Activated CD4-positive, alpha-beta T cell treated with anti-CD3 and anti-CD28 coated beads for 36 hours (primary cell): ENCODE measurements at regions of chr3 and their contacts with region 1.

Region 1: DNA sequence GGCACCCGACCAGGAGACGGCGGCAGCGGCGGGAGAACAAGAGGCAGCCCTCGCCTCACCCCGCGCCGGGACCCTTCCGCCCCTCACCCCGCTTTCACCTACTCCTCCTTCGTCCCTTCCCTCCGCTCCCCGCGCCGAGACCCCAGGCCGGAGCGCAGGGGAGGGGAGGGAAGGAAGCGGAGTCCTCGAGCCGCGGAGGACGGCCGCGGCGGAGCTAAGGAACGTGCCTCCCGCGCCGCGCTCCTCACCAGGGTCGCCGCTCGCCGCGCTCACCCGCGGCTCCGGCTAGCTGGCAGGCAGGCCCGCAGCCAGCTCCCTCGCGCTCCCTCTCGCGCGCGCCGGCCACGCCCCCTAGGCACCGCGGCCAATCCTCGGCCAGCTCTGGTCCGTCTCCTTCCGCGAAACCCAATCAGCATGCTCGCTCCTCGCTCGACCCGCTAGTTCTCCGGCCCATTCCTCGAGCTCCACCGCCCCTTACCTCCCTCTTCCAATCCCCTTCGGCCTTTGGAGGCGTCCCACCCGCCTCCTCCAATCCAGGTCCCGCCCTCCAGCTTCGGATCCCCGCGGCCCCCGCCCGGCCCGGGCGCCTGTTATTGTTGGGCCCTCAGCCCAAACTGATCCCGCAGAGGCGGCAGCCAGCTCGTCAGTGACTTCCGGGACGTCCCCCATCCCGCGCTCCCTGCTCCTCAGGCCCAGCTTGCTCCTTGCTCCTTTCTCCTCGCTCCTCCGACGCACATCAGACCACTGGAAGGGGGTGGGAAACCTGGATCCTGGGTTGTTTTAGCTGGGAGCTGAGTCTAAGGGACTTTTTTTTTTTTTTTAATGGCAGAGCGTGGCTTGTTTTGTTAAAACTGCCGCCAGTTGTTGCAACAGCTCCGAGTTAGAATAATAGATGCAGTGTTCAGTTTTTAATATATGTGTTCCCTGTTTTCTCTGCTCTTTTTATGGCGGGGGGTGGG is at the start of gene DCBLD2:
- DNase-seq: peak; percentile 96
- ATAC-seq: peak; percentile 100
- H3K4me3 Mint-ChIP-seq: peak within 1 kb of the TSS; percentile 80
- H3K27ac Mint-ChIP-seq: peak within 1 kb of the TSS; percentile 69
- H3K4me1 Mint-ChIP-seq: peaks cover 16% of the 10 kb centered on the region
- H3K27me3 Mint-ChIP-seq: peaks cover 5% of the 10 kb centered on the region
- total RNA-seq, gene DCBLD2: 1.9 to 2.5 TPM

Region 2: DNA sequence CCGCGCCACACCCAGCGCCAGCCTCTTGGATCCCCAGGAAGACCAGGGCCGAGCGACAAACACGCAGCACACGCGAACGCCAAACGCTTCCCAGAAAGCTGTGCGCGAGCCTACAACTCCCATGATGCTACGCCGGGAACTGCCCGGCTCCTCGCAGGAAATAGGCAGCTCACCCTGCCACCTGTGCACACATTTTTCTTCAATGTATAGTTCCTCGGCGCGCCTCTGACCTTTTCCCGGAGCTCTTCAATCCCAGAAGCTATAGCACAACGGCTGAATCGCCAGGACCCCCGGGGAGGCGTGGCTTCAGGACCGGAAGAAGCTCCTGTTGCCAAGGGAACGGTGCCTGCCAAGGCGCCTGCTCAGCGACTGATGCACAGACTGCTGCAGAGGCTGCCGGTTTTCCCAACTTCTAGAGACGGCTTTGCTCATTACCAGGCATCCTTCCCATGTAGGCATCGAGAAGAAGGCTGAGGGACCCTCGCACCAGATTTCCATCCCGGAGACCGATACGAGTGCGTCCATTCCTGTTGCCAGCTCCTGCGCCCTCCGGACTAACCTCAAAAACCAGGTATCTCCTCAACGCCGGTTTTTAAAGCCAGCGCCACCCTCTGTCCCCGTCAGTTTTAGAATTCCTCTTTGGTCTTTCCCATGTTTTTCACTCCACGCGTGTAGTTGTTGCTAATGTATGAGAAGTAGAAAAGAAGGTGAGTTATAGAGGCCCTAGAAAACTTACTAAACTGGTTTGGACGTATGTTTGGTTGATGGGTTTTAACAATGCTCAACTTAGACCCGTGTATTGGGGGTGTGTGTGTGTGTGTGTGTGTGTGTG is 1137.0 kb before region 1 on chr3 and contains the start of gene ARL6:
- CTCF ChIA-PET with region 1: no interaction called
- POLR2A ChIA-PET with region 1: interaction called, 4 read pairs
- intact Hi-C with region 1: loop called in 1 of 2 experiments (anchors 5 kb)
- DNase-seq: peak; percentile 86
- ATAC-seq: peak; percentile 95
- H3K4me3 Mint-ChIP-seq: peak within 1 kb of the TSS; percentile 97
- H3K27ac Mint-ChIP-seq: peak within 1 kb of the TSS; percentile 97
- H3K4me1 Mint-ChIP-seq: peaks cover 25% of the 10 kb centered on the region
- H3K27me3 Mint-ChIP-seq: no peaks in the 10 kb centered on the region
- total RNA-seq, gene ARL6: 6.9 TPM

Region 3: DNA sequence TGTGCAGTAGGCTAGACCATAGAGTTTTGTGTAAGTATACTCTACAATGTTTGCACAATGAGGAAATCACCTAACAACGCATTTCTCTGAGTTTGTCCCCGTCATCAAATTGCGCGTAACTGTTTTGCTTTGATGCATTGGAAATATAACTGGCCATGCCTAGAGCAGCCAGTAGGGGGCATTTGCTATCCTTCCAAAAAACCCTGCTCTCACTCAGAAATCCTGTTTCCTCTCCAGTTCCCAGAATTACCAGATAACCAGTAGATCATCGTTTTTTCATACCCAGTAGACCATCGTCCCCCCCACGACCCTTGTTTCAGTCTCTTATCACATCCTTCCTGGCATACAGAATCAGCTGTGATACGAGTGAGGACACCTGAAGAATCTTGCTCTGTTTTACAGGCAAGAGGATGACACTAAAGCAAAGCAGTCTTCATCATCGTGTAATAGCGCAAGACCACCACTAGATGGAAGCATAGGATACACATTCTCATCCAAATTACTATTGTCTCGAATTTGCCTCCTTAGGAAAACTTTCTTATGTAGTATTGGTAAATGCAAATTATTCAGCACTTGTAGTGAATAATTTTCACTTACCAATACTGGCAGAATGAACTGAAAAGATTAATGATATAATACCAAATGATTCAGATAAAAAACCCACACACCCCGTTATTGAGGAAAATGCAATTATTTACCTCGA is 862.2 kb before region 1 on chr3:
- CTCF ChIA-PET with region 1: no interaction called
- POLR2A ChIA-PET with region 1: no interaction called
- intact Hi-C with region 1: loop called in 1 of 2 experiments (anchors 5 kb)
- DNase-seq: peak; percentile 84
- ATAC-seq: peak; percentile 88
- H3K4me3 Mint-ChIP-seq: peak overlapping the region; percentile 76
- H3K27ac Mint-ChIP-seq: peak overlapping the region; percentile 97
- H3K4me1 Mint-ChIP-seq: peaks cover 12% of the 10 kb centered on the region
- H3K27me3 Mint-ChIP-seq: peaks cover 4% of the 10 kb centered on the region

Region 4: DNA sequence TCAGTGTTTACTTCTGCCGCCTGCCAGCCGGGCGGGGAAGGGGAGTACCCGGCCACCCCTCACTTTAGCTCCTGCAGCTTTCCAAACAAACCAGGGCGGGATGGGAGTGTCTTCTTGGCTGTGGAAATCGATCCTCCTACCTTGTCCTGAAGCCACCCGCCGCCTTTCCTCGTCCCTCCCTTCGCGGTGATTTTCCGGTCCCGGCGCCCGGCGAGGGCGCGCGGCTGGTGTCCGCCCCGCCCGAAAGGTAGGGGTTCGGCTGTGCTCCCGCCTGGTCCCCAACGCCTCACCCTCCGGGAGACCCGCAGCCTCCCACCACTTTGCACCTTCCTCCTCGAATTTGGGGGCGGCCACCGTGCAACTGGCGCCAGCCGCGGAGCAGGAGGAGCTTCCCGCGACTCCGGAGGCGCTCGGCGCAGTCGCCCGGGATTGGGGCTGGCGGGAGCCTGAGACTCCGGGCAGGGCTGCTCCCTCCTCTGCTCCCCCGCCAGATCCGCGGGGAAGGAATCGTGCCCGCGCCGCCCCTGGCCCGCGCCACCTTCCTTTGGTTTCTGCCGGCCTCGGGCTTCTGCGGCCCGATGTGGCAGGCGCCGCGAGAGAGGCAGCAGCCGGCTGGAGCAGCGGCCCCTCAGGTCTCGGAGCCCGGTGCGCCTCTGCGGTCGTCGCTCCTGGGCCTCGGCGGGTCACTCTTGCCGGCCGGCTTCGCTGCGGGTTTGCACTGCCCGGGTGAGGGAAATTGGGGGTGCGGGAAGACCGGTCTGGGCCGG is 169.2 kb before region 1 on chr3:
- CTCF ChIA-PET with region 1: interaction called, 7 read pairs
- POLR2A ChIA-PET with region 1: no interaction called
- intact Hi-C with region 1: loop called in 1 of 2 experiments (anchors 5 kb)
- DNase-seq: peak; percentile 22
- ATAC-seq: peak; percentile 52
- H3K4me3 Mint-ChIP-seq: peak overlapping the region; percentile 70
- H3K27ac Mint-ChIP-seq: no peak overlapping the region
- H3K4me1 Mint-ChIP-seq: peaks cover 12% of the 10 kb centered on the region
- H3K27me3 Mint-ChIP-seq: peaks cover 47% of the 10 kb centered on the region

Region 5: DNA sequence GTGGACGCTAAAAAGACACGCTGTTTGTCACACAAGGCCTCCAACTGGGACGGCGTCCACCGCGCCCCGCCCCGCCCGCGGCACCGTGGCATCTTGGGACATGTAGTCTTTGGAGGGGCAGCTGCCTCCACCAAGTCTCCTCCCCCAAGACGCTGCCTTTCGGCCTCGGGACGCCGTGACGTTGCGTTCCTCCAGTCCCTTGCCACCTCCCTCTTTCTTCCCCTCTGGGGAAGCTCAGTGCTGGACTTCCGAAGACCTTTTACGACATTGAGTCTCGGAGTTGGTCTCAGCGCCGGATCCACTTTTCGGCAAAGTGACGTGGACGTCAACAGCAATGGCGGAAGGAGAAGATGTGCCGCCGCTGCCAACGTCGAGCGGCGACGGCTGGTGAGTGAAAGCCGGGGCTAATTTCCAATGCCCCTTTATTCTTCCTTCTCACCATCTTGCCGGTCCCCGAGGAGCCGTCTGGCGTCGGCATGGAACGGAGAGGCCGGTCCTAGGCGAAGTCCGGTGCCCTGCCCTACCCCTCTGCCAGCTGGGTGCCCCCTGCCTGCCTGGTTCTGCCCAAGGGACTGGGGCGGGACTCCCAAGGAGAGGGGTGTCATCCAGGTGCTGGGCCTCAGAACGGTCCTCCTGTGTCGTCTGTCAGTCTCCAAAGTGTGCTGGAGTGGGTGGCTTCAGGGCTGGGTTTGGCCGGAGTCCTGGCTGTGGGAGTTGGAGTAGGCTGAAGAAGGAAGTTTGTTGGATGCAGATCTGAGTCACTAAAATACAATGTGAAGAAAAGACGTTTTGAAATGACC is 1359.2 kb after region 1 on chr3 and contains the start of gene TBC1D23:
- CTCF ChIA-PET with region 1: no interaction called
- POLR2A ChIA-PET with region 1: no interaction called
- intact Hi-C with region 1: loop called in 1 of 2 experiments (anchors 5 kb)
- DNase-seq: peak; percentile 98
- ATAC-seq: peak; percentile 100
- H3K4me3 Mint-ChIP-seq: peak within 1 kb of the TSS; percentile 91
- H3K27ac Mint-ChIP-seq: peak within 1 kb of the TSS; percentile 96
- H3K4me1 Mint-ChIP-seq: peaks cover 58% of the 10 kb centered on the region
- H3K27me3 Mint-ChIP-seq: no peaks in the 10 kb centered on the region
- total RNA-seq, gene TBC1D23: 17.6 to 19.4 TPM